ENCODE measurements at regions of chr10 and their contacts with region 1.

Region 1: DNA sequence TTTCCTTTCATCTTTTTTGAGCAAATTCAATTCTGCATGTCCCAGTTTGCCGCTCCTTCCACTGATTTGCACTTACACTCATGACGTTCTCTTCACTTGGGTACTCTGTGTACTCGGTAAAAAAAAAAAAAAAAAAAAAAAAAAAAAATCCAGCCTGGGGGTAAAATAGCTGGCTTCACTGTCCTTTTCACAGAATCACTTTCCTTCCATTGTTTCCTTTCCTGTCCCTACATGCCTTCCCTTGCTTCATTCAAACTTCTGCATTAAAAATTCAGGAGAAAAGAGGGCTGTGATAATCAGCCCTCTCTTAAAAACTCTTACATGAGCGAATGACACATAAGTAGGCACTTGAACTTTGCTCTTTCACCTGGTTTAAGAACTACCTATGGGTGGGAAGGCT is 8.7 kb downstream of the ANKRD1 start:
- DNase-seq: no peak
- H3K4me3 ChIP-seq: no peak overlapping the region
- H3K27ac ChIP-seq: no peak overlapping the region
- H3K4me1 ChIP-seq: no peaks in the 10 kb centered on the region
- H3K27me3 ChIP-seq: no peaks in the 10 kb centered on the region
- CTCF ChIP-seq: no peak

Region 2: DNA sequence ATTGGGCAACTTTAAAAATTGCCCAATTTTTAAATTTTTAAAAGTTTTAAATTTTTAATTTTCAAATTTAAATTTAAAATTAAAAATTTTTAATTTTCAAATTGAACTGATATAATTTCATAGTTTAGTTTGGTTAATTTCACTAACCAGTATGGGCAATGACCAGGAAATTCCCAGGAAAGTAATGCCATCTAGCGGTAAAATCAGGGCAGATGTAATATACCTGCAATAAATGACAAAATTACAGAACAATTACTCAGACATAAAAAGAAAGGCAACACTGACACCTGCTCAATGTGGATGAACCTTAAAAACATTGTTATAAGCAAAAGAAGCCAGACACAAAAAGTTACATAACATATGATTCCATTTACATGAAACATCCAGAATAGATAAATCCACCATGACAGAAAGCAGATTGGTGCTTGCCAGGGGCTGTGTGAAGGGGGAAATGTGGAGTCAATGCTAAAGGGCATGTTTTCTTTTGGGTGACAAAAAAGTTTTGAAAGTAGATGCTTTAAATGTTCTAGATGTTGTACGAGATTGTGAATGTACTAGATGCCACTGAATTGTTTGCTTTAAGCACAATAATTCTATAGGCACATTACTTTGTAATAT is 1348.2 kb before region 1 on chr10:
- CTCF ChIA-PET with region 1: no interaction called
- POLR2A ChIA-PET with region 1: no interaction called
- intact Hi-C with region 1: no loop called
- DNase-seq: peak in 1 of 2 experiments; percentile 42
- H3K4me3 ChIP-seq: no peak overlapping the region
- H3K27ac ChIP-seq: no peak overlapping the region
- H3K4me1 ChIP-seq: no peaks in the 10 kb centered on the region
- H3K27me3 ChIP-seq: no peaks in the 10 kb centered on the region
- CTCF ChIP-seq: peak; percentile 69

Region 3: GRCh38 chr10:90602862-90603610 is 309.1 kb before region 1 on chr10:
- CTCF ChIA-PET with region 1: no interaction called
- POLR2A ChIA-PET with region 1: no interaction called
- intact Hi-C with region 1: no loop called
- DNase-seq: no peak
- H3K4me3 ChIP-seq: no peak overlapping the region
- H3K27ac ChIP-seq: no peak overlapping the region
- H3K4me1 ChIP-seq: no peaks in the 10 kb centered on the region
- H3K27me3 ChIP-seq: no peaks in the 10 kb centered on the region
- CTCF ChIP-seq: no peak

Region 4: DNA sequence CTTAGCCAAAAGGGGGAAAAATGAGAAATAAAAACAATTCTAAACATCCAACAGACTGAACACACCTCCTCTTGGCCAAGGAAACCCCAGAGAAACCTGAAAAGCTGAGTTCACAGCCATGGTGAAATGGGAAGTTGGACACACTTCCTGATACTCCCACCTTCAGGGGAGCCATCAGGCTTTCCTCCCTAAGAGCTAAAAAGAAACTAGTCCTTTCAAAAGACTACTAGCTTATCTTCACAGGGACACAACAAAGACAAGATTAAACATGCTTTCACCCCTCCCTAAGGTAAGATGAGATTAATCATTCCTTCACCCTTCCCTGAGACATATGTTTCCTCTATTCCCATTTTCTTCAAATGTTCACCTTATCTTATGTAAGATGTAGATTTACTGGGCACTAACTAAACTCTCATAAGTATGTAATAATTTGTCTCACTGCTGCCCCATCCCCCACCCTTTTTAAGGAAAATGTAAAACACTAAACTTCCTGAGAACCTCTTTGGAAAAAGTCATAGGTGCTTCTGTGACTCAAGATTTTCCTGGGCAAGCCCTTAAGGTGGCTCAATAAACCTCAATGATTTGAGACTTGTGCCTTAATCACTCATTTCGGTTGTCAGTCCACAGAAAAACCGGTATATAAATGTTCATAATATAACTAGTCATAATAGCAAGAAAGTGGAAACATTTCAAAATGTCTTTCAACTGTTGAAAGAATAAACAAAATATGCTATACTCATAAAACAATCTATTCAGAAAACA is 94.9 kb before region 1 on chr10:
- CTCF ChIA-PET with region 1: no interaction called
- POLR2A ChIA-PET with region 1: no interaction called
- intact Hi-C with region 1: no loop called
- DNase-seq: no peak
- H3K4me3 ChIP-seq: no peak overlapping the region
- H3K27ac ChIP-seq: no peak overlapping the region
- H3K4me1 ChIP-seq: no peaks in the 10 kb centered on the region
- H3K27me3 ChIP-seq: no peaks in the 10 kb centered on the region
- CTCF ChIP-seq: no peak

Region 5: DNA sequence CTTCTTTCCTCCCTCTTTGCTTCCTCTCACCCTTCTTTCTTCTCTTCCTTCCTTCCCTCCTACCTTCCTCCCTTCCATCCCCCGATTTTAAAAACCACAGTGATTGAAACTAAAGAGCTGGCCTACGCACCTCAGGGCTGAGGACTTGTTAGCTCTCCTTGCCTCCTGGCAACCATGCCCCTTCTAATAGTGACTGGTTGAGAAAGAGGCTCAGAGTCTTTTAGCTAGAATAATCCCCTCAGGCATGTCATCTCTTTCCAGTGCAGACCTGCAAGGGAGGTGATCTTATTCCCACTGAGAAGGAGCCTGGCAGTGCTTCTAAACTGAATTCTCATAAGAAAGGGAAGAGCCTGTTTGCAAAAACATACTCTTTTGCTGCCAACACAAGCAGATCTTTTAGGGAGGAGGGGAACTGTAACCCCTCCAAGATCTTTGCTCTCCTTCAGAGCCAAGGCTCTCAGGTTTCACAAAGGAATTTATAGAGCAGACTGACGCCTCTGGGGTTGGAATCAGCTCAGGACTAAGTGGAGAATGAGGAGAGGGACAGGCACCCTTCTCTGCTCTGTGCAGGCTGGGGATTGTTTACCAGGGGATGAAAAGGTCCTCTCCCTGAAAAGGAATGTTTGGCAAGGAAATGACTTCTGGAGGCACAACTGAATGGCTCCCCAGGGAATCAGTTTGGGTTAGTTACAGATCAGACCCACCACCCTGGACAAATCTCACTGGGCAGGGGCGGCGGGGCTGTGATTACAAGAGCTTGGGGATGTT is 18.1 kb after region 1 on chr10:
- CTCF ChIA-PET with region 1: interaction called, 4 read pairs
- POLR2A ChIA-PET with region 1: no interaction called
- intact Hi-C with region 1: loop called (anchors 1 kb)
- DNase-seq: peak; percentile 64 to 91
- H3K4me3 ChIP-seq: peak overlapping the region; percentile 23; the same call in 1 of the 2 replicates
- H3K27ac ChIP-seq: peak overlapping the region; percentile 93
- H3K4me1 ChIP-seq: peaks cover 48% of the 10 kb centered on the region
- H3K27me3 ChIP-seq: no peaks in the 10 kb centered on the region
- CTCF ChIP-seq: no peak

Region 6: GRCh38 chr10:90935581-90936275 is 23.6 kb after region 1 on chr10:
- CTCF ChIA-PET with region 1: interaction called, 3 read pairs
- POLR2A ChIA-PET with region 1: interaction called, 28 read pairs
- intact Hi-C with region 1: loop called (anchors 1 kb)
- DNase-seq: peak in 1 of 2 experiments; percentile 72
- H3K4me3 ChIP-seq: no peak overlapping the region
- H3K27ac ChIP-seq: no peak overlapping the region
- H3K4me1 ChIP-seq: peaks cover 19% of the 10 kb centered on the region
- H3K27me3 ChIP-seq: no peaks in the 10 kb centered on the region
- CTCF ChIP-seq: no peak

Region 7: DNA sequence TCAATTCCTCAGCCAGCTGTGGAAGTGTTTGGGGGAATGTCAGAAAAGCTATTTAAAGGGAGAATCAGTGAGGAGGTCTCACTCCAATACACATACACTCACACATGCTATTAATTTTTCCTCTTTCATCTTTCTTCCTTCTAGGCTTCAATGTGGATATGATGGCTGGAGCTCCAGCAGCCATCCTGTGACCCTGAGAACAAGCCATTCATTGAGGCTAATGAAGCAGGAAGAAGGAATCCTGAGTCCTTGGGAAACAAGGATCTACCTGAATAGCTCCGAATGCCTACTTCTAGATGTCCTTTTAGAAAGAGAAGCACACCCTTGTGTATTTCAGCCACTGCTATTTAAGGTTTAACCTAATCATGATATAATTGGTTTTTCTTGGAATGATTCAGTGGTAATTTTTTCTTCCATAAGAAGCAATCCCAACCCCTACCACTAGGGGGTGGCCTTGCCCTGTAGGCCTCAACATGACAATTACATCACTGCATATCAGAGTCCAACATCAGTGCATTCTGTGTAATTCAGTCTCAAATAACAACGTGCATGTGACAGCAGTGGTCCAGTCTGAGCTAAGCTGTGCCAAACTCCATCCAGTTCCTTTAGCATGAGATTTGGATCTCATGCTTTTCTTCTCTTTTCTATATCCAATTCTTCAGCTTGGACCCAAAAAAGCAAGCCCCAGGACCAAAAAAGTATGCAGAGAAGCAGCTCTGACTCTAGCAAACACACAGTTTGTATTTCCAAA is 94.0 kb after region 1 on chr10:
- CTCF ChIA-PET with region 1: interaction called, 4 read pairs
- POLR2A ChIA-PET with region 1: no interaction called
- intact Hi-C with region 1: loop called (anchors 1 kb)
- DNase-seq: peak; percentile 35 to 46
- H3K4me3 ChIP-seq: no peak overlapping the region
- H3K27ac ChIP-seq: no peak overlapping the region
- H3K4me1 ChIP-seq: no peaks in the 10 kb centered on the region
- H3K27me3 ChIP-seq: no peaks in the 10 kb centered on the region
- CTCF ChIP-seq: peak; percentile 88

Region 8: GRCh38 chr10:91043173-91043910 is 131.2 kb after region 1 on chr10:
- CTCF ChIA-PET with region 1: no interaction called
- POLR2A ChIA-PET with region 1: no interaction called
- intact Hi-C with region 1: loop called (anchors 1 kb)
- DNase-seq: peak in 1 of 2 experiments; percentile 2
- H3K4me3 ChIP-seq: no peak overlapping the region
- H3K27ac ChIP-seq: no peak overlapping the region
- H3K4me1 ChIP-seq: no peaks in the 10 kb centered on the region
- H3K27me3 ChIP-seq: no peaks in the 10 kb centered on the region
- CTCF ChIP-seq: peak; percentile 52

Region 9: DNA sequence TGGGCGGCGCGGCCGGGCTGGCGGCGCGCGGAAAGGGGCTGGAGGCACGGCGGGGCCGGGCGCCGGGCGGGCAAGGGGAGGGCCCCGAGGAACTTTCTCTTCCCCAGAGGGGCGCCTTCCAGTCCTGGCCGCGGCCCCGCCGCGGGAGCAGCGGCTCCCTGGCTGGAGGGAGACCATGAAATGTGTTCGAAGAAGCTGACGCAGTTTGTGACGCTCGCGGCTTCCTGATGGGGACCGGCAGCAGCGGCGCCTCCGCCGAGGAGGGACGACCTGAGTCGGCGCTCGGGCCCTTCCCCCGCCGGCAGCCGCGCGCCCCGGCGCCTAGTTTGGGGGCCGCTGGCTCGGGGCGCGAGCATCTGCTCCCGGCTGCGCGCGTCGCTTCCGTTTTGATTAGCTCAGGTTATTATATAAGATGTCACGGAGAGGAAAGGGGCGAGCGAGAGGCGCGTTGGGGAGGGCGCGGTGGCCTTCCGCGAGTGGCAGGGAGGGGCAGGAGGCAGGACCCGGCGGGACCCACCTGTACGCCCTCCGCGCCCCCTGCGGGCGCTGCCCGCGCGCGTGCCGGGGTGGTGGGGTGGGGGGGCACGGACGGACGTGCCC is 251.2 kb after region 1 on chr10:
- CTCF ChIA-PET with region 1: no interaction called
- POLR2A ChIA-PET with region 1: no interaction called
- intact Hi-C with region 1: loop called (anchors 2 kb)
- DNase-seq: peak in 1 of 2 experiments; percentile 42
- H3K4me3 ChIP-seq: peak overlapping the region; percentile 84
- H3K27ac ChIP-seq: peak overlapping the region; percentile 66
- H3K4me1 ChIP-seq: 0 out of 2 replicates have a peak, but pooled peaks cover 11% of the 10 kb centered on the region
- H3K27me3 ChIP-seq: no peaks in the 10 kb centered on the region
- CTCF ChIP-seq: no peak

Region 10: DNA sequence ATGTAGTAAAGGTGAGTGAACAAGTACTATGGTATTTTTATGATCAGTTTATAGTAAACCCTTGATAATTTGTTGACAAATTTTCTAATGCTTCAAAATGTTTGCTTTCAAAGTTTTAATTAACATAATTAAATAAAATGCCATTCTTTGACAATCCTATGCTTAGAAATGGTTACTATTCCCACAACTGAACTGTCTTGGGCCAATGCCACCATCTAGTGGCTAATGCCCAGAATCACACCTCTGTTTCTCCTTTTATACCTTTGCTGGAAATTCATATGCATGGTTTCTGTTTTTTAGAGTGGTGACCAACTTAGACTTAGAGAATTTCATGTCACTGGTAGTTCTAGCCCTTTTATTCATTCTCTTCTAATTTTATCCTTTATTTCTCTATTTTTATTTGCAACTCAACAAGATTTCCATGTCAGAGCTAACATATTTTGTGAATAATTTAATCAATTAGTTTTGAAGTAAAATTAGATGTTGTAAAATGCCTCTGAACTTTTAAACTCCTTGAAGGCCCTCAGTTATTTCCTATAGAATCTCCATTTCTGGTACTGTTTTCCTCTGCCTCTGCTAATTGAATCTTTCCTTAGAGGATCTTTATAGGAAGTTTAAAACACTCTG is 339.4 kb after region 1 on chr10:
- CTCF ChIA-PET with region 1: interaction called, 3 read pairs
- POLR2A ChIA-PET with region 1: no interaction called
- intact Hi-C with region 1: loop called (anchors 1 kb)
- DNase-seq: peak in 1 of 2 experiments; percentile 17
- H3K4me3 ChIP-seq: no peak overlapping the region
- H3K27ac ChIP-seq: no peak overlapping the region
- H3K4me1 ChIP-seq: no peaks in the 10 kb centered on the region
- H3K27me3 ChIP-seq: no peaks in the 10 kb centered on the region
- CTCF ChIP-seq: peak; percentile 84

Measured in PC-9 (cell line).